ENCODE measurements at regions of chr1 and their contacts with region 1.

Region 1: DNA sequence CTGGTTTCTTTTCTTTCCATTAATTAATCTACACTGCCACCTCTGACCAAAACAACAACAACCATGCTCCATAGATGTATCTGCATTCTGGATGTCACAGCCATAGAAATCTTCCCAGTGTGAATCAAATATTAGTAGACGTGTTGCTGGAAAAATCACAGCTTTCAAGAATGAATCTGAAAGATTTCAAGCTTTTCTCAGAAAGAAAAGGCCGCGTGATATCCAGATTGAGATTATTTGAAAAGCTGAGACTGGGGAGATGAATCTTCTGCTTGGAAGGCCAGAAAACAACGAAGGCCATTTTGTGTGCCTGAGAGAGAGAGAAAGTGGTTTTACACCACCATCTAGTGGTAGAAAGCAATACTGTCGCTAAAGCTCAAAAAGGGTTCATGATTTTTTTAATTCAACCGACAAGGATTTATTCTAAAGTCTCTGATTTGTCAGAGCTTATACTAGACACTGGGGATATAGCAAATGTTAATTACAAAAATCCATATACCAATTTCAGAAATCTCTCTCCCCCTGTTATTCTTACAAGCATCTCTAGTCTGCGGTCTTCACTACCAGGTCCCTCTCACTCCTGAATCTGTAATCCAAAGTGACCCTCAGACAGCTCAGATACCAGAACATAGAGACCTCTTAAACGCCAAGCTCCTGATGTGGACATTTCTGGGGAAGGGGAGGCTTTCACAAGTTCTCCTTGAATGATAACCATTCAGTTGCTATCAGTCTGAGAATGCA is 87.5 kb upstream of the SGIP1 start:
- DNase-seq: peak; percentile 67
- ATAC-seq: peak; percentile 66
- H3K4me3 Mint-ChIP-seq: peak overlapping the region; percentile 76
- H3K27ac Mint-ChIP-seq: peak overlapping the region; percentile 96
- H3K4me1 Mint-ChIP-seq: peaks cover 25% of the 10 kb centered on the region
- H3K27me3 Mint-ChIP-seq: peaks cover 11% of the 10 kb centered on the region

Region 2: DNA sequence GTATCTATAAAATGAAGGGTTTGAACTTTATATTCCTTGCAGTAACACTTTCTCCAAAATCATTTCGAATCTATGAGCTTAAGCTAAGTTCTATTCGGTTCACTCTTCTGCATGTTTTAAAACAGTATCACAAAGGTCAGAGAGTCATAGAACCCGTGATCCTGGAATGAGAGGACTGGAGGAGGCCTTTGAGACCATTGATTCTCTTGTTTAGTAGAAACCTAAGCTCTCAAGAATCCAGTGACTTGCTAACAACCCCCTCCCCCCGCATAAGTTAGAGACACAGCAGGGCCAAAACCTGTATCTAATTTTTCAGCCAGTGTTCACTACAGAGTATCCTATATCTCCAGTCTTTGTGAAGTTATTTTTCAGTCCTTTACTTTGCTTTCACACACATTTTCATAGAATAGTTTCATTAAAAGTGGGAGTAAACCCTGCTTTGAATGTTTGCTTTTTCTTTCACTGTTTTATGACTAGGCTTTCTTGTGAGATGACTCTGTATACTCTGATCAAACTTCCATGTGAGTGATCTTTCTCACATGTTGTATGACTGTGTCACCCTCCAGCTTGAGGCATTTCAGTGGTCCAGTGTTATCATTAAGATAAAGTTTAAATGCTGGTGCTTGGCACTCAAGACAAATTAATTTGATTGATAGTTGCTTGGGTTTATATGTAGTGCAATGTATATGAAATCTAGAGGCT is 187.9 kb before region 1 on chr1:
- CTCF ChIA-PET with region 1: interaction called, 703 read pairs
- POLR2A ChIA-PET with region 1: interaction called, 4 read pairs
- DNase-seq: no peak
- ATAC-seq: no peak
- H3K4me3 Mint-ChIP-seq: no peak overlapping the region
- H3K27ac Mint-ChIP-seq: no peak overlapping the region
- H3K4me1 Mint-ChIP-seq: peaks cover 52% of the 10 kb centered on the region
- H3K27me3 Mint-ChIP-seq: no peaks in the 10 kb centered on the region

Region 3: GRCh38 chr1:66288048-66288447 is 158.4 kb before region 1 on chr1:
- CTCF ChIA-PET with region 1: interaction called, 39 read pairs
- POLR2A ChIA-PET with region 1: interaction called, 3 read pairs
- DNase-seq: no peak
- ATAC-seq: no peak
- H3K4me3 Mint-ChIP-seq: no peak overlapping the region
- H3K27ac Mint-ChIP-seq: no peak overlapping the region
- H3K4me1 Mint-ChIP-seq: peaks cover 61% of the 10 kb centered on the region
- H3K27me3 Mint-ChIP-seq: no peaks in the 10 kb centered on the region

Region 4: GRCh38 chr1:66350001-66350547 is 96.4 kb before region 1 on chr1:
- CTCF ChIA-PET with region 1: interaction called, 63 read pairs
- POLR2A ChIA-PET with region 1: interaction called, 15 read pairs
- DNase-seq: peak; percentile 60
- ATAC-seq: peak; percentile 67
- H3K4me3 Mint-ChIP-seq: peak overlapping the region; percentile 77
- H3K27ac Mint-ChIP-seq: peak overlapping the region; percentile 84
- H3K4me1 Mint-ChIP-seq: peaks cover 88% of the 10 kb centered on the region
- H3K27me3 Mint-ChIP-seq: no peaks in the 10 kb centered on the region

Region 5: GRCh38 chr1:66402194-66402593 is 44.2 kb before region 1 on chr1:
- CTCF ChIA-PET with region 1: interaction called, 13 read pairs
- POLR2A ChIA-PET with region 1: no interaction called
- DNase-seq: no peak
- ATAC-seq: no peak
- H3K4me3 Mint-ChIP-seq: no peak overlapping the region
- H3K27ac Mint-ChIP-seq: no peak overlapping the region
- H3K4me1 Mint-ChIP-seq: peaks cover 18% of the 10 kb centered on the region
- H3K27me3 Mint-ChIP-seq: no peaks in the 10 kb centered on the region

Region 6: GRCh38 chr1:66739401-66740157 is 293.1 kb after region 1 on chr1:
- CTCF ChIA-PET with region 1: no interaction called
- POLR2A ChIA-PET with region 1: no interaction called
- DNase-seq: no peak
- ATAC-seq: no peak
- H3K4me3 Mint-ChIP-seq: no peak overlapping the region
- H3K27ac Mint-ChIP-seq: peak overlapping the region; percentile 26
- H3K4me1 Mint-ChIP-seq: peaks cover 9% of the 10 kb centered on the region
- H3K27me3 Mint-ChIP-seq: peaks cover 4% of the 10 kb centered on the region

Region 7: GRCh38 chr1:66852870-66853269 is 406.4 kb after region 1 on chr1:
- CTCF ChIA-PET with region 1: no interaction called
- POLR2A ChIA-PET with region 1: no interaction called
- DNase-seq: no peak
- ATAC-seq: no peak
- H3K4me3 Mint-ChIP-seq: no peak overlapping the region
- H3K27ac Mint-ChIP-seq: no peak overlapping the region
- H3K4me1 Mint-ChIP-seq: no peaks in the 10 kb centered on the region
- H3K27me3 Mint-ChIP-seq: no peaks in the 10 kb centered on the region

Measured in activated CD8-positive, alpha-beta T cell treated with anti-CD3 and anti-CD28 coated beads, Interleukin-2, amount 10 ng/mL, durations not matched to agents 7 days and 5 days (primary cell).